Prostate gland (tissue), 2 donors: ENCODE measurements at regions of chr10 and their contacts with region 1.

Region 1: GRCh38 chr10:71812016-71812912 is 38.8 kb downstream of the PSAP start:
- DNase-seq: peak; percentile 44
- H3K4me3 ChIP-seq: no peak overlapping the region
- H3K27ac ChIP-seq: no peak overlapping the region
- H3K4me1 ChIP-seq: no peaks in the 10 kb centered on the region
- H3K27me3 ChIP-seq: no peaks in the 10 kb centered on the region
- CTCF ChIP-seq: peak; percentile 47 to 93 (median 86)
- POLR2A ChIP-seq: no peak

Region 2: GRCh38 chr10:71314028-71314693 is 498.1 kb before region 1 on chr10:
- intact Hi-C with region 1: loop called (anchors 5 kb)
- DNase-seq: peak; percentile 35
- H3K4me3 ChIP-seq: no peak overlapping the region
- H3K27ac ChIP-seq: peak overlapping the region; percentile 17 to 26
- H3K4me1 ChIP-seq: no peaks in the 10 kb centered on the region
- H3K27me3 ChIP-seq: no peaks in the 10 kb centered on the region
- CTCF ChIP-seq: peak; percentile 48 to 86 (median 78)
- POLR2A ChIP-seq: no peak

Region 3: DNA sequence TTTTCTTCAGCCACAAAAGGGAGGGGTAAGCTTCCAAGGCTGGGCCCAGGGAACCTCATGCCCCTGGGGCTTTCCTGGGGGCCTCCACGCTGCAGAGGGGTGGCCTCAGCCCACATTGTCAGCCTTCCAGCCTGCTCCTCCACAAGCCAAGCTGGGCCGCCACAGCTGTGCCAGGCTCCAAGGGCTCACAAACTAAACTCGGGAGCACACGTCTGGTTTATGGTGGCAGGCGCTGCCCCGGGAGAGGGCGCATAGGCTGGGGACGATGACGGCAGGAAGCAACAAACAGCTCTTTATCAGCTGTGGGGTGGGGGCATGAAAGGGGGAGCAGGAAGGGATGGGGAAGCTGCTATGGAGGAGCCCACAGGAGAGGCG is 421.8 kb before region 1 on chr10:
- intact Hi-C with region 1: loop called (anchors 5 kb)
- DNase-seq: no peak
- H3K4me3 ChIP-seq: no peak overlapping the region
- H3K27ac ChIP-seq: no peak overlapping the region
- H3K4me1 ChIP-seq: no peaks in the 10 kb centered on the region
- H3K27me3 ChIP-seq: no peaks in the 10 kb centered on the region
- CTCF ChIP-seq: no peak
- POLR2A ChIP-seq: no peak

Region 4: GRCh38 chr10:71696628-71697326 is 115.5 kb before region 1 on chr10:
- intact Hi-C with region 1: no loop called
- DNase-seq: no peak
- H3K4me3 ChIP-seq: no peak overlapping the region
- H3K27ac ChIP-seq: no peak overlapping the region
- H3K4me1 ChIP-seq: no peaks in the 10 kb centered on the region
- H3K27me3 ChIP-seq: no peaks in the 10 kb centered on the region
- CTCF ChIP-seq: peak; percentile 54 to 76 (median 58)
- POLR2A ChIP-seq: no peak

Region 5: DNA sequence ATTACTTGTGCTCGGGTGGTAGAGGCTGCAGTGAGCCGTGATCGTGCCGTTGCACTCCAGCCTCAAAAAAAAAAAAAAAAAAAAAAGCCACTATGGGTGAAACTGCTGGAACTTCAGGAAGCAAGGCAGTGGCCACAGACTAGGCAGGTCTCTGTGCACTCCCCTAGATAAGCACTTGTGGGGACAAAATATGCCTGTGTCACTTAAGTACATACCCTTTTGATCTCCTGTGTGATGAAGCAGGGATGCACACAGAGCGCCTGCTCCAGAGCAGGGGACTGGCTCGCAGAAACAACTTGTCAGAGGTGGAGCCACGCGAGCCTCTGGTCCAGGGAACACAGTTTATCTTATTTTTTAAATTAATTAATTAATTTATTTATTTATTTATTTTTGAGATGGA is 81.7 kb after region 1 on chr10:
- intact Hi-C with region 1: loop called (anchors 10 kb)
- DNase-seq: no peak
- H3K4me3 ChIP-seq: no peak overlapping the region
- H3K27ac ChIP-seq: no peak overlapping the region
- H3K4me1 ChIP-seq: no peaks in the 10 kb centered on the region
- H3K27me3 ChIP-seq: no peaks in the 10 kb centered on the region
- CTCF ChIP-seq: no peak
- POLR2A ChIP-seq: no peak